GM10248 (cell line): ENCODE measurements at regions of chr6 and their contacts with region 1.

Region 1: GRCh38 chr6:70955441-70956190 is 1.2 kb downstream of the B3GAT2 start:
- DNase-seq: peak; percentile 85
- CTCF ChIP-seq: peak; percentile 97

Region 2: GRCh38 chr6:70310063-70310694 is 645.4 kb before region 1 on chr6:
- CTCF ChIA-PET with region 1: interaction called, 56 read pairs
- POLR2A ChIA-PET with region 1: no interaction called
- DNase-seq: no peak
- CTCF ChIP-seq: peak; percentile 64

Region 3: GRCh38 chr6:70520575-70520974 is 435.0 kb before region 1 on chr6:
- CTCF ChIA-PET with region 1: interaction called, 10 read pairs
- POLR2A ChIA-PET with region 1: no interaction called
- DNase-seq: peak; percentile 11
- CTCF ChIP-seq: peak; percentile 39

Region 4: DNA sequence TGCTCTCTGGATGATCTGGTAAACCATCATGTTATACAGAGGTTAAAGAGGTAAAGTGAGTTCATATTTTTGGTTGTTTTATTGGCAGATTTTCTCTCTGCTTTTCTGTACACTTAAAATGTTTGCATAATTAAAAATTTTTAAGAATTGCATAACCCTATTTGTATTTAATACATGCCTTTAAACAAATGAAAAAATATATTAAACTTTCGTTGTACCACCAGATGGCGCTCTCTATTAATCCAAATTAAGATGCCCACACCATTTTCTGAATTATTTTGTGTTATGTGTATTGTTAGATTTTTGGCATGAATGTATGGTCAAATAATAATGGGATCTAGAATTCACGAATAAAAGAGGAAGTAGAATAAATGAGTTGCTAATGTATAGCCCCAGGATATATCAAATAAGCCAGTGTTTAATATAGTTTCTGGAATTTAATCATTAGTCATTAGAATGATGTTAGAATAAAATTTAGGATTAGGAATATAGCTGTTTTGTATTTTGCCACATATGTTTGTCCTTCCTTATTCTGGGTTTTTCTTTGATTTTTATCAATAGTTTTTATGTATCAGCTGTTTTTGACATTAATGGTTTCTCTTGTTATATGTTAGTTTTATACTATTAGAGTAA is 249.0 kb before region 1 on chr6:
- CTCF ChIA-PET with region 1: interaction called, 18 read pairs
- POLR2A ChIA-PET with region 1: no interaction called
- DNase-seq: no peak
- CTCF ChIP-seq: peak; percentile 38

Region 5: GRCh38 chr6:70846207-70846835 is 109.3 kb before region 1 on chr6:
- CTCF ChIA-PET with region 1: no interaction called
- POLR2A ChIA-PET with region 1: no interaction called
- DNase-seq: no peak
- CTCF ChIP-seq: no peak

Region 6: GRCh38 chr6:70973604-70974003 is 18.0 kb after region 1 on chr6:
- CTCF ChIA-PET with region 1: interaction called, 11 read pairs
- POLR2A ChIA-PET with region 1: no interaction called
- DNase-seq: no peak
- CTCF ChIP-seq: no peak

Region 7: DNA sequence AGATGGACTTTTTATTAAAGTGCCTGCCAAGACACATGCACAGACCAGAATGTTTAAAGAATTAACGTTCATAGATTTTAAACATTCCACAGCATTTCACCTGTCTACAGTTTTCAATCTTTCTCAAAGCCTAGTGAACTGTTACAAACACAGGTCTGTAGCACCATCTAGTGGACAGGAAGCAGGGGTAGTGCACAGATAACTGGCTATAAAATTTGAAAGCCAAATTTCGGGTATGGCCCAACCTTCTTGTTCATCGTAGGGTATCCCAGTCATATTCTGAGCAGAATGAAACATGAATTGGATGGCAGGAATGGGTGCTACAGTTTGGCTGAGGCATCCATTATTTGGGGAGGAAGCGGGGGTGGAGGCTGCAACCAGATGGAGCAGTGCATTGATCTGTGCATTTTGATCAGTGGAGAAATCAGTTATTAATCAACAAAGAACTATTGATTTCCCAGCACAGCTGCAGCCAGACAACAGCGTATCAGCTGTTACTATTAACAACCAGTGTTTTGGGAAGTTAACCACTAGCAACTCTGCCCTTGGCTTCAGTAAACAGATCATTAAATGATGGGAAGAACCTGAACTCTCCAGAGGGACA is 57.4 kb after region 1 on chr6:
- CTCF ChIA-PET with region 1: interaction called, 13 read pairs
- POLR2A ChIA-PET with region 1: no interaction called
- DNase-seq: peak; percentile 56
- CTCF ChIP-seq: peak; percentile 85

Region 8: DNA sequence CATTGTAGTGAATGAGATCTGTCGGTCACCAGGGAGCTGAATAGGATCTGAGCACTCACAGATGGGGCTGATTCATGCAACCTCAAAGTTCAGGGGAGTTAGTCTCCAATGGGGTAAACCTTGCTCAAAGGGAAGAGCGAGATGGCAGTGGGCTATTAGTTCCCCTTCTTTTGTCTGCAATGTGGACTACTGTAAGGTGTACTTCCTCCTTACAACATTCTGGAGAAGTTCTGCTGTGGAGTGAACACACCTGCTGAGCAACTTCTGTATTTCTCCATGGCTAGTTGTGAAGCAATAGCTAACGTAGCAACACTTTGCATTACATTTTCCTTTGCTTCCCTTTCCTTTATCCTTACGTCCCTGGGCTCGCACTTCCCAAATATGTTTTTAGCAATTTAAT is 135.6 kb after region 1 on chr6:
- CTCF ChIA-PET with region 1: no interaction called
- POLR2A ChIA-PET with region 1: no interaction called
- DNase-seq: no peak
- CTCF ChIP-seq: no peak